ENCODE measurements at regions of chr18 and their contacts with region 1.

Region 1: DNA sequence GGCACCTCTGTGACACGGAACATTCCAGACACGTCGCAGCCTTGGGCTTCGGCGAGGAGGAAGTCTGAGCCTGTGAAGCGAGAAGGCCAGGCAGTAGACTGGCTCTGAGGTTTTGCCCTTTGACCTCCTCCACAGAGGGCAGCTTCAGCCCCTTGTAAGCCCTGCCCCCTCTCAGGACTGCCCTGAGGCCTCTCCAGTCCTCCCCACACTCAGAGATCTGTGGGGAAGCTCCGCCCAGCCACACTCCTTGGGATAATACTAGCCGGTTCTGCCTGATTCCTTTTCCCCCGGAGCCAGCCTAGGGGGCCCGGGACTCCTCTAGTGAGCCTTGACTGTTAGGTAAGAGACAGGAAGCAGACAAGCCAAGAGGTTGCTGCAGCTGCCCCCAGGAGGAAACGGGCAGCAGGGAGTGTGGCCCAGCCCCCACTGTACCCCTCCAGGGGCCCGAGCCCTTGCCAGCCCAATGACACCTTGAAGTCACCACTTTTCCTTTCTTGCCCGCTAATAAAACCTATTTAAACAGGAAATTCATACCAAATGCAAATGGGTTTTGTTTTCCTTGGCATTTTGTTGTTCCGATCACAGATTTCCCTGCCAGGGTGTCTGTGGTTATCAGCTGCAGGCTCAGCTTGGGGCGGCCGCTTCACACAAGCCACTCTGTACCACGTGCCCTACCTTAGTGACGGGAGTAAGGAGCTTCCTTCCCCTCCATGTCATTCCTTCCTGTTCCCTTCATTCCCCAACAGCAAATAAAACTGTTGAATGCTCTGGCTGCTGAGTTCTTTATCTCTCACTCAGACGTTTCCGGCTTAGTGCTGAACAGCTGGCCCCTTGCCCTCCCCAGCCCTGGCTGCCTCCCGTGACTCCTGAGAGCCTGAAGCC is 124.7 kb downstream of the CABLES1 start:
- DNase-seq: peak; percentile 90

Region 2: GRCh38 chr18:23143016-23143814 is 116.7 kb before region 1 on chr18:
- intact Hi-C with region 1: loop called in 1 of 2 experiments (anchors 10 kb)
- DNase-seq: peak; percentile 82

Region 3: GRCh38 chr18:23220355-23220754 is 39.6 kb before region 1 on chr18:
- intact Hi-C with region 1: no loop called
- DNase-seq: no peak